ENCODE measurements at regions of chr1 and their contacts with region 1.

Region 1: DNA sequence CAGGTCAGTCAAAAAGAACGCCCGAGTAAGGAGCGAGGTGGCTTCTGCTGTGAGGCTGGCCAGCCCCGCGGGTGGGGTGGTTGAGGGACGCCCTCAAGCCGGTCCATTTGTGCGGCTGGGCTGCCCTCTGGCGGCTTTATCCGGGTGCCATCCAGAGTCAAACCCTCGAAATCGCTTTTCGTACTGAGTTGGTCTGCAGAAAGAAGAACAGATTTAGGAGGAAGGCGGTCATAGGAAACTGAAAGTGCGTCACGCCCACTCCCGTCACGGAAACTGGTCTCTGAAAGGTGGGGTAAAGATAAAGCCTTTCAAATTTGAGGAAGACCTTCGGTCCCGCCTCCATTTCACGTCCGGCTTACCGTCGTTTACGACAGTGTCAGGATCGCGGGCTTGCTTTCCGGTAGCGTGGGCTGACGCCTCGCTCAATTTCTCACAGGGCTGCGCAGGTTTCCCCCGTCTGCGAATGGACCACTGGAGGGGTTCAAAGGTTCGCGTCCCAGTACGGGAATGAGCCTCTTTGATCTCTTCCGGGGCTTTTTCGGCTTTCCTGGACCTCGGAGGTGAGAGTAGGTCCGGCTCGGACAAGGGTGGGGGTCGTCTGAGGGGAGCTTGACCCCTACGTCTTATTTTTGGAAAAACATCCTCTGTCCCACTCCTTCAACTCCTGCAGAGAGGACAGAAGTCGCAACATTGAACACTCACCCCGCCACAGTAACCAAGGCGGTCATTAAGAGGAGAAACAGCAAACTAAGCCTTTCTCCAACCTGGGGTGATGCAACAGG is at the start of gene HAX1:
- DNase-seq: peak; percentile 97
- ATAC-seq: peak; percentile 94
- H3K4me3 ChIP-seq: peak within 1 kb of the TSS; percentile 87
- H3K27ac ChIP-seq: peak within 1 kb of the TSS; percentile 87
- H3K4me1 ChIP-seq: peaks cover 4% of the 10 kb centered on the region; the same call in 1 of the 2 replicates
- H3K27me3 ChIP-seq: no peaks in the 10 kb centered on the region
- CTCF ChIP-seq: peak; percentile 86
- POLR2A ChIP-seq: peak; percentile 71
- RAD21 ChIP-seq: peak; percentile 79
- total RNA-seq, gene HAX1: 140 and 146 TPM in 2 replicates

Region 2: DNA sequence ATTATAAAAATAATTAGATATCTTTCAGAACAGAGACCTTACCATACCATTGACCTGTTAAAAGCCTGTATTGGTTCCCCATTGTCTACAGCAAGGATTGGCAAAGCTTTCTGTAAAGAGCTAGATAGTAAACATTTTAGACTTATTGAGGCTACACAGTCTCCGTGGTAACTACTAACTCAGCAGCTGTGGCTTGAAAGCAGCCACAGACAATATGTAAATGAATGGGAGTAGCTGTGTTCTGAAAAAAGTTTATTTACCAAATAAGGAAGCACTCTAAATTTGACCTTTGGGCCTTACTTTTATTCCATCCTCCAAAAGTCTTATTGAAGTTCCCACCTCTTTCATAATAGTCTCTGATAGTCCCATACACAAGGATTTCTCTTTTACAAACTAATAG is 157.2 kb before region 1 on chr1:
- CTCF ChIA-PET with region 1: no interaction called
- POLR2A ChIA-PET with region 1: no interaction called
- dilution Hi-C with region 1: no loop called
- in situ Hi-C with region 1: no loop called
- intact Hi-C with region 1: no loop called
- DNase-seq: no peak
- ATAC-seq: no peak
- H3K4me3 ChIP-seq: no peak overlapping the region
- H3K27ac ChIP-seq: no peak overlapping the region
- H3K4me1 ChIP-seq: no peaks in the 10 kb centered on the region
- H3K27me3 ChIP-seq: no peaks in the 10 kb centered on the region
- CTCF ChIP-seq: no peak
- POLR2A ChIP-seq: no peak
- RAD21 ChIP-seq: no peak

Region 3: DNA sequence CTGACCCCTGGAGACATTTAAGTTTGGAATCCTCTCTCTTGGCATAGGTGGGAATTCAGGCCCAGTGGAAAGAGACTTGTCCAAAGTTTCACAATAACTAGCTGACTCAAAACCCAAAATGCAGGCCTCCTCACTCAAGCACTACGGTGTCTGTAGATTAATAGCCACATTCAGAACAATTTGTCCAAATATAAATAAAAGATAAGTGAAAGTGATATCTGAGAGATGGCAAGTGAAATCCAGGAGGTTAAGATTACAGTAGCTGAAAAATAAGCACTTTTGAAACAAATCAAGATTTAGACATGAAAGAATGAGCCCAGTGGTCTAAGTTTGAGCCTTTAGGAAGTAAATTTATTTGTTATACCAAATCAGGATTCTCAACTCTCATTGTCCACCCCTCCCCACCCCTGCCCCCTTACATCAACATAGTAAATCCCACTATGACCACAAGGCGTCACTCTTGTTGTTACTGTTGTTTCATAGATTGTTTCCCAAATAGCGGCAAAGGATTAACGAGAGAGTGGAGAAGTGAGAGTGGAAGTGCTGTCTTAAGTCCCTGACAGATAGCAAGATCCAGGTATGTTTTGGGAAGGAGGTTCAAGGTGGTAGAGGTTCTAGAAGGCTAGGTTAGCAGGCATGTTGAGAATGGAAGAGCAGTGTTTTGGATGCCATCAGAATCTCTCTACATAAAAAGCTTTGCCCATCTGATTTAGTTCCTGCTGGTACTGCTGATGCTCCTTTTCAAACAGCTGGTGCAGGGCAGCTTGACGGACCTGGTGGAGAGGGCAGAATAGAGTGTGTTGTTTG is 73.4 kb before region 1 on chr1:
- CTCF ChIA-PET with region 1: no interaction called
- POLR2A ChIA-PET with region 1: no interaction called
- dilution Hi-C with region 1: no loop called
- in situ Hi-C with region 1: no loop called
- intact Hi-C with region 1: loop called (anchors 1 kb)
- DNase-seq: peak; percentile 69
- ATAC-seq: peak; percentile 91
- H3K4me3 ChIP-seq: peak overlapping the region; percentile 19; the same call in 1 of the 2 replicates
- H3K27ac ChIP-seq: no peak overlapping the region
- H3K4me1 ChIP-seq: no peaks in the 10 kb centered on the region; the same call in 1 of the 2 replicates
- H3K27me3 ChIP-seq: peaks cover 13% of the 10 kb centered on the region
- CTCF ChIP-seq: peak; percentile 64
- POLR2A ChIP-seq: no peak
- RAD21 ChIP-seq: peak; percentile 57

Region 4: DNA sequence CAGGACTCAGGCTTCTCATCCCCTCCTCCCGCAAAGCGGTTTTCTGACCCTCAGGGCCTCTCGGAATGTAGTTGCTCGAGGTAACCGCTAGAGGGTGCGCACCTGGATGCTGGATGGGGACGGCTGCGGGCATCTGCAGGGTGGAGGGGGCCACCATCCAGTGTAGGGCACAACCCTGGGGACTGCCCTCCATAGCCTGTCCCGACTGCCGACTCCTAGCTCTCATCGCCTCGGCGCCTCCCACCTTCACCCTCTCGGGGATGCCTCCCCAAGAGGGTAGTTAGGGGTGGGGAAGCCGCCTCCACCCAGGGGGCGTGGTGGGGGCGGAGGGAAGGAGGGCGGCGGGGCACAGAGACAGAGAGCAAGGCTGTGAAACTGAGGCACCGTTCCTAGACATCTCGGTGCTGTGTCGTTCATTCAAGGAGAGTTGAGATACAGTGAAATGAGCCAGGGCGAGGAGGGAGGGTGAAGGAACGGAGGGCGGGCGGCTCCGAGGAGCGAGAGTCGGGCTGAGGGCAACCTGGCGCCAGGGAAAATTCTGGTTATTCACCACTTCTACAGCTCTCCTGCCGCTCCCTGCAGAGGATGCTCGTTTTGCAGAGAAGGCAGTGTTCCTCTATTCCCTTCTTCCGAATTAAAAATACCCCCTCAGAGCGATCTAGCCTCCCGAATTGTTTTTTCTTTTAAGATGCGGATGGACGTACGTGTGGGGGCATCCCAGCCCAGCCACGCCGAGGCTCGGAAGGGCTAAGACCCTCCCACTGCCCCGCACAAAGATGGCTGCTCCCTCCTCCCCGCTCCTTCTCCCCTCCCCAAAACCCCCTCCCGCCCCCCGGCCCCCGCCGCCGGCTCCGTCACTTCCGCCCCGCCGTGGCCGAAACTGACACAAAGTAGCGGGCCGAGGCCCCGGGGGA is 52.5 kb after region 1 on chr1 and contains the start of gene ATP8B2:
- CTCF ChIA-PET with region 1: no interaction called
- POLR2A ChIA-PET with region 1: no interaction called
- dilution Hi-C with region 1: no loop called
- in situ Hi-C with region 1: no loop called
- intact Hi-C with region 1: loop called (anchors 2 kb)
- DNase-seq: peak; percentile 65
- ATAC-seq: peak; percentile 52
- H3K4me3 ChIP-seq: peak within 1 kb of the TSS; percentile 77
- H3K27ac ChIP-seq: peak within 1 kb of the TSS; percentile 88
- H3K4me1 ChIP-seq: peaks cover 22% of the 10 kb centered on the region
- H3K27me3 ChIP-seq: peaks cover 17% of the 10 kb centered on the region; the same call in 1 of the 2 replicates
- CTCF ChIP-seq: peak; percentile 86
- POLR2A ChIP-seq: no peak
- RAD21 ChIP-seq: peak; percentile 54
- total RNA-seq, gene ATP8B2: 91.0 and 91.9 TPM in 2 replicates

Region 5: GRCh38 chr1:154335025-154335714 is 62.8 kb after region 1 on chr1:
- CTCF ChIA-PET with region 1: interaction called, 5 read pairs
- POLR2A ChIA-PET with region 1: no interaction called
- dilution Hi-C with region 1: no loop called
- in situ Hi-C with region 1: loop called (anchors 5 kb)
- intact Hi-C with region 1: loop called (anchors 1 kb)
- DNase-seq: peak; percentile 82
- ATAC-seq: peak; percentile 83
- H3K4me3 ChIP-seq: no peak overlapping the region
- H3K27ac ChIP-seq: peak overlapping the region; percentile 86
- H3K4me1 ChIP-seq: peaks cover 10% of the 10 kb centered on the region
- H3K27me3 ChIP-seq: no peaks in the 10 kb centered on the region
- CTCF ChIP-seq: peak; percentile 86
- POLR2A ChIP-seq: no peak
- RAD21 ChIP-seq: peak; percentile 76

Region 6: GRCh38 chr1:154442006-154442740 is 169.8 kb after region 1 on chr1:
- CTCF ChIA-PET with region 1: no interaction called
- POLR2A ChIA-PET with region 1: no interaction called
- dilution Hi-C with region 1: no loop called
- in situ Hi-C with region 1: no loop called
- intact Hi-C with region 1: loop called (anchors 10 kb)
- DNase-seq: peak; percentile 64
- ATAC-seq: peak; percentile 5; the same call in 1 of the 2 replicates
- H3K4me3 ChIP-seq: no peak overlapping the region
- H3K27ac ChIP-seq: no peak overlapping the region
- H3K4me1 ChIP-seq: peaks cover 23% of the 10 kb centered on the region
- H3K27me3 ChIP-seq: peaks cover 17% of the 10 kb centered on the region
- CTCF ChIP-seq: 0 out of 2 replicates have a peak, but pooled peaks have one; percentile 22
- POLR2A ChIP-seq: no peak
- RAD21 ChIP-seq: no peak

Region 7: GRCh38 chr1:154546264-154547063 is 274.1 kb after region 1 on chr1:
- CTCF ChIA-PET with region 1: no interaction called
- POLR2A ChIA-PET with region 1: no interaction called
- dilution Hi-C with region 1: no loop called
- in situ Hi-C with region 1: no loop called
- intact Hi-C with region 1: loop called (anchors 1 kb)
- DNase-seq: peak; percentile 58
- ATAC-seq: peak; percentile 97
- H3K4me3 ChIP-seq: no peak overlapping the region
- H3K27ac ChIP-seq: no peak overlapping the region
- H3K4me1 ChIP-seq: no peaks in the 10 kb centered on the region
- H3K27me3 ChIP-seq: peaks cover 32% of the 10 kb centered on the region
- CTCF ChIP-seq: peak; percentile 79
- POLR2A ChIP-seq: no peak
- RAD21 ChIP-seq: peak; percentile 89